Activated CD4-positive, alpha-beta memory T cell treated with anti-CD3 and anti-CD28 coated beads for 36 hours (primary cell): ENCODE measurements at regions of chr18 and their contacts with region 1.

Region 1: GRCh38 chr18:70683263-70683662 is 394.4 kb downstream of the SOCS6 start:
- DNase-seq: no peak
- H3K4me3 Mint-ChIP-seq: no peak overlapping the region
- H3K27ac Mint-ChIP-seq: no peak overlapping the region
- H3K4me1 Mint-ChIP-seq: peaks cover 13% of the 10 kb centered on the region
- H3K27me3 Mint-ChIP-seq: no peaks in the 10 kb centered on the region

Region 2: DNA sequence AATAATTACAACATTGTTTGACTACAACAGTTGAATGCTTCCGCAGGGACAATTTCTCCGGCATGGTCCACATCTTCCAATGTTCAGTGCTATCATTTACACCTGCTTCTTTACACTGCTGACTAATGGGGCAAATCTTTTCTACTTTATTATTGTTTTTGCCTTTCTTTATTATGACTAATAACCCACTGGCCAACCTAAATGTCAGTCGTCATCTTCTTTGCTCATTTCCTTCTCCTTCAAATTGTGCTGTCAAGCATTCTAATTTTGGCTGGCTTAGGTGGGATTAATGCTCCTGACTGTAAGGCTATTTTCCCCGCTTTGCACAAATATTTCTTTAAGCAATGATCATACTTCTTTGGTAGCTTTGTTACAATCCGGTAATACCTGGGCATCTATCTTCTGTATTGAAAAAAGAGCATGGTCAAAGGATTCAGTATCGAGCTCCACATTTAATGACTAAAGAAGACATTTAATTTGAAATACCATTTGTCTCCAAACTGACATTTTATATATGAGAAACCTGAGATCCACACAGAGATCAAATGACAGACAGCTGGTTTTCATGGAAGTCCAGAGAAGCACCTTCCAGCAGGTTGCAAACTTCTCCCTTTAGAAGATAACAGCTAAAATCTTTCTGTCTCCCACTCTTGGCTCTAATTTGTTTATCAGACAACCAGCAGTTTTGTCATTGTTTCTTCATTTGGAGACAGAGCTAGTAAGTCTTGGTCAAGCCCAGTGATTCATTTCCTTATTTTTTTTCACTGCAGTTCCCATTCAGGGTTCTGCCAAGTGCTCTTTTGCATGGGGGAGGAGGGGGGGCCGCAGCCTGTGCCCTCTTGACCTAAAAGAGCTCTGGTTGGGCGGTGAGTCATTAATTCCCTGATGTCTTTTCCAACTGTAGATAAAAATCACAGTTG is 261.5 kb before region 1 on chr18:
- CTCF ChIA-PET with region 1: no interaction called
- POLR2A ChIA-PET with region 1: no interaction called
- intact Hi-C with region 1: no loop called
- DNase-seq: peak; percentile 16
- H3K4me3 Mint-ChIP-seq: no peak overlapping the region
- H3K27ac Mint-ChIP-seq: no peak overlapping the region
- H3K4me1 Mint-ChIP-seq: peaks cover 4% of the 10 kb centered on the region
- H3K27me3 Mint-ChIP-seq: peaks cover 11% of the 10 kb centered on the region

Region 3: GRCh38 chr18:70659036-70659925 is 24.0 kb before region 1 on chr18:
- CTCF ChIA-PET with region 1: no interaction called
- POLR2A ChIA-PET with region 1: no interaction called
- intact Hi-C with region 1: loop called (anchors 2 kb)
- DNase-seq: peak; percentile 47
- H3K4me3 Mint-ChIP-seq: peak overlapping the region; percentile 35
- H3K27ac Mint-ChIP-seq: peak overlapping the region; percentile 20
- H3K4me1 Mint-ChIP-seq: peaks cover 34% of the 10 kb centered on the region
- H3K27me3 Mint-ChIP-seq: no peaks in the 10 kb centered on the region

Region 4: DNA sequence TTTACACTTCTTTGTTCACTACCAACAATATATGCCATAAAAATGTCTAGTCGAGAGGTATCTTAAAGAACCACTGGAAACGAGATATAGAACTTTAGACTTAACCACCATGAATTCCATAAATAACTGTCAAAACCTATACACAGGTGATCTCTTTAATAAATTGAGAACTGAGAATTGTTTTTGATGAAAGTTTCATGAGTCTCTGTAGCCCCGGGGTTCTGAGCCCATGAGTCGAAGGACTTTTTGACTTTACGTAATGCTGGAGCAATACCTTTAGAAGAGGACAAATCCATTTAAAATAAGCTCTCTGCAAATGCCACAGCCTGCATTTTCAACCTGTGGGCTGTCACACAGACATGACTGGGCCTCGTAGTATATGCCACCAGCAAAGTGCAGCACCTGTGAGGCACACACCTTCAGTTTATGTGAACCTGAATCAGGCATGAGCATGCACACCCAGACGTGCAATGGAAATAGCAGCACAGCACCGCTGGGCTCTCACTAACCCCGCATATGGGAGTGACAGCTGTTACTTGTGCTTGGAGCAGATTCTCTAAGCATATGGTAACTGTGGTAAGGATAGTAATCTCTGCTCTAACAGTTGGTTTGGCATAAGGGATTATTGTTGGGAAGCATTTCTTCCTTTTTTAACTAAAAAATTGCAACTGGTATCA is 11.2 kb before region 1 on chr18:
- CTCF ChIA-PET with region 1: interaction called, 3 read pairs
- POLR2A ChIA-PET with region 1: no interaction called
- intact Hi-C with region 1: loop called (anchors 1 kb)
- DNase-seq: peak; percentile 22
- H3K4me3 Mint-ChIP-seq: no peak overlapping the region
- H3K27ac Mint-ChIP-seq: no peak overlapping the region
- H3K4me1 Mint-ChIP-seq: peaks cover 30% of the 10 kb centered on the region
- H3K27me3 Mint-ChIP-seq: no peaks in the 10 kb centered on the region